Breast epithelium (tissue), 4 donors: ENCODE measurements at regions of chr9 and their contacts with region 1.

Region 1: GRCh38 chr9:137506702-137507171 is 43.5 kb downstream of the PNPLA7 start:
- DNase-seq: no peak
- H3K4me3 ChIP-seq: no peak overlapping the region
- H3K27ac ChIP-seq: no peak overlapping the region
- H3K4me1 ChIP-seq: no peaks in the 10 kb centered on the region
- H3K27me3 ChIP-seq: no peaks in the 10 kb centered on the region
- CTCF ChIP-seq: no peak
- POLR2A ChIP-seq: no peak

Region 2: GRCh38 chr9:137569609-137570203 is 63.0 kb after region 1 on chr9:
- intact Hi-C with region 1: loop called (anchors 2 kb)
- DNase-seq: no peak
- H3K4me3 ChIP-seq: no peak overlapping the region
- H3K27ac ChIP-seq: no peak overlapping the region
- H3K4me1 ChIP-seq: no peaks in the 10 kb centered on the region
- H3K27me3 ChIP-seq: no peaks in the 10 kb centered on the region
- CTCF ChIP-seq: no peak
- POLR2A ChIP-seq: no peak